ENCODE measurements at regions of chr10 and their contacts with region 1.

Region 1: GRCh38 chr10:21989453-21990154 is 13.9 kb downstream of the DNAJC1 start:
- DNase-seq: peak in 4 of 5 donors; percentile 15 to 77 (median 50)
- ATAC-seq: peak; percentile 87 to 95 (median 92)
- H3K4me3 ChIP-seq: no peak overlapping the region
- H3K27ac ChIP-seq: peak overlapping the region in 4 of 12 donors; percentile 3 to 44 (median 17)
- H3K4me1 ChIP-seq: peaks cover 0 to 11% (median 2%) of the 10 kb centered on the region in 12 donors
- H3K27me3 ChIP-seq: no peaks in the 10 kb centered on the region
- CTCF ChIP-seq: peak; percentile 16 to 62 (median 44)
- POLR2A ChIP-seq: no peak

Region 2: DNA sequence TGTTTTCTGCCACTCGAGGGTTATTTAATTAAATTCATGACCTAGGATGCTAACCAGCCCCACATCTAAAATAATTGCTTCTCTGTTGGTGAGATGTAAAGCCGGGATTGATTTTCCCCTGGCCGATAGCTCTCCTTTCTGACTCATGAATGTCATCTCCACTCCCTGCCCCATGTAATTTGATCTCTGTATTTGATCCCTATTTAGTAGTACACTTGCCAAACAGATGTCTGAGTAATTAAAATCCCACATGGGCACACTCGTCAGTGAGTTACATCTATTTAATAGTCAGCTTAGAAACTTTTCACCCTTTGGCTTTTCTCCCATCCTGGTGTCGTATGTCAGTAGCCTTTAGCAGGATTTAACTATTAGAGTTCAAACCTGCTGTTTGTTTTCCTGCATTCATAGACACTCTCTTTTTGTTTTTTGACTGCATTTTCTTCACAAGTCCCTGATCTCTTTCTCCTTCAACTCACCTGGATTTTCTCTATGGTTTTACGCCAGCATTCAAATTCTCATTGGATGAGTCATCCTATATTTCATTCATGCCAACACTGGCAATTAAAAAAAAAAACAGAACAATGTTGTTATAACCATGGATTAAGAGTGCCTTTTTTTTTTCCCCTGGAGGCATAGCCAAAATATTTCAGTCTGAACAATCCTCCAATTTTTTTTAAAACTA is 438.4 kb after region 1 on chr10:
- intact Hi-C with region 1: loop called in 1 of 10 experiments (anchors 10 kb)
- DNase-seq: no peak
- ATAC-seq: peak in 2 of 4 donors; percentile 33 to 42
- H3K4me3 ChIP-seq: no peak overlapping the region
- H3K27ac ChIP-seq: no peak overlapping the region
- H3K4me1 ChIP-seq: peaks cover 0 to 11% (median 7%) of the 10 kb centered on the region in 12 donors
- H3K27me3 ChIP-seq: peaks cover 0 to 9% (median 0%) of the 10 kb centered on the region in 9 donors
- CTCF ChIP-seq: no peak
- POLR2A ChIP-seq: no peak

Region 3: GRCh38 chr10:22560913-22561239 is 571.3 kb after region 1 on chr10:
- intact Hi-C with region 1: loop called in 1 of 10 experiments (anchors 10 kb)
- DNase-seq: no peak
- ATAC-seq: no peak
- H3K4me3 ChIP-seq: no peak overlapping the region
- H3K27ac ChIP-seq: no peak overlapping the region
- H3K4me1 ChIP-seq: no peaks in the 10 kb centered on the region
- H3K27me3 ChIP-seq: no peaks in the 10 kb centered on the region
- CTCF ChIP-seq: no peak
- POLR2A ChIP-seq: no peak

Region 4: DNA sequence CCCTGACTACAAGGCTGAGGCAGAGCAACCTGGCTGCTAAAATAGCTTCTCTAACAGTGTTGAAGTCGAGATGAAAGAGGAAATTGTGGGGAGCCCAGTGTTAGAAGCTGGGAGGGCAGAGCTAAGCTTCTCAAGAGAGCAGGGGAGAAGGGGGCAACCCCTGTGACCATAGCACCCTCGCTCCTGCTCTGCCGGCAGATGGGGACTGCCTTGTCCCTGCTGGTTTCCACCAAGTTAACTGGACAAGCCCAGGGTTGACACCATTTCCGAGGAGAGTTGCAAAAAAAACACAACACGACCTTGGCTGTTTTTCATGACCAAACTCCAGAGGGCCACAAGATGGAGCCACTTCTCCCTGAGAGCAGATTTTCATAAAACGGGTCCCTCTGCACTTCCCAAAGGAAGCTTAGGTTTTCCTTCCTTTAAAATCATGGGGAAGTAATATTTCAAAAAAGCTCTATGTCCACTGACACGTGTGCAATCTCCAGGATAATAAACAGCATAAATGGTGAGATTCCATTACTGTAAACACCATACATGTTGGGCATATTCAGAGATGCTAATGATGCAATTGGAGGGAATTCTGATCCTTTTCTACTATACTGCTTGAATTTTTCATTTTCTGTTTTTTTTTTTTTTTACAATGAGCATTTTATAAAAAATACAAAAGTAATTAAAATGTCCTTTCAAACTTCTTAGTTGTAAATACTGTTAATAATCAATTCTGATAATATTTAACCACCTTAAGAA is 584.4 kb after region 1 on chr10:
- intact Hi-C with region 1: loop called in 2 of 10 experiments (anchors 10 kb)
- DNase-seq: peak in 1 of 5 donors; percentile 24
- ATAC-seq: peak in 2 of 4 donors; percentile 49 to 53
- H3K4me3 ChIP-seq: no peak overlapping the region
- H3K27ac ChIP-seq: no peak overlapping the region
- H3K4me1 ChIP-seq: peaks cover 0 to 15% (median 6%) of the 10 kb centered on the region in 12 donors
- H3K27me3 ChIP-seq: no peaks in the 10 kb centered on the region
- CTCF ChIP-seq: peak in 10 of 12 donors; percentile 22 to 71 (median 37)
- POLR2A ChIP-seq: no peak

Region 5: DNA sequence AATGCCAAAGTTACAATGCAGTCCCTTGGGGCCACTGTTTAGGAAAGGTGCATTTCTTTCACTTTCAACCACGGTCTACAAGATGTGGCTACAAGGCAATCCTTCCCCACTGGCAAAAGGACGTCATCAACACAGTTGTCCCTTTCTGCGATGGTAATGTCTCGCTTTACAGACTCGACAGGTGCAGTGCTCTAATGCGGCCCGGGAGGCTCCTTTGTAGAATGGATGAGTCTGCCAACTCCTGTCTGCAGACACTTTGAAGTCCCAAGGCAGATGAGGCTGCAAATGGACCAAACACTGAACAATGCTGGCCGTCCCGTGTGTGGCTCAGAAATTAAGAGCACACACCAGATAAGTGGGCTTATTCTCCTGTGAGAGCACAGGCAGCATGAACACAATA is 591.1 kb after region 1 on chr10:
- intact Hi-C with region 1: loop called in 2 of 10 experiments (anchors 10 kb)
- DNase-seq: no peak
- ATAC-seq: no peak
- H3K4me3 ChIP-seq: no peak overlapping the region
- H3K27ac ChIP-seq: no peak overlapping the region
- H3K4me1 ChIP-seq: no peaks in the 10 kb centered on the region
- H3K27me3 ChIP-seq: no peaks in the 10 kb centered on the region
- CTCF ChIP-seq: no peak
- POLR2A ChIP-seq: no peak

Region 6: DNA sequence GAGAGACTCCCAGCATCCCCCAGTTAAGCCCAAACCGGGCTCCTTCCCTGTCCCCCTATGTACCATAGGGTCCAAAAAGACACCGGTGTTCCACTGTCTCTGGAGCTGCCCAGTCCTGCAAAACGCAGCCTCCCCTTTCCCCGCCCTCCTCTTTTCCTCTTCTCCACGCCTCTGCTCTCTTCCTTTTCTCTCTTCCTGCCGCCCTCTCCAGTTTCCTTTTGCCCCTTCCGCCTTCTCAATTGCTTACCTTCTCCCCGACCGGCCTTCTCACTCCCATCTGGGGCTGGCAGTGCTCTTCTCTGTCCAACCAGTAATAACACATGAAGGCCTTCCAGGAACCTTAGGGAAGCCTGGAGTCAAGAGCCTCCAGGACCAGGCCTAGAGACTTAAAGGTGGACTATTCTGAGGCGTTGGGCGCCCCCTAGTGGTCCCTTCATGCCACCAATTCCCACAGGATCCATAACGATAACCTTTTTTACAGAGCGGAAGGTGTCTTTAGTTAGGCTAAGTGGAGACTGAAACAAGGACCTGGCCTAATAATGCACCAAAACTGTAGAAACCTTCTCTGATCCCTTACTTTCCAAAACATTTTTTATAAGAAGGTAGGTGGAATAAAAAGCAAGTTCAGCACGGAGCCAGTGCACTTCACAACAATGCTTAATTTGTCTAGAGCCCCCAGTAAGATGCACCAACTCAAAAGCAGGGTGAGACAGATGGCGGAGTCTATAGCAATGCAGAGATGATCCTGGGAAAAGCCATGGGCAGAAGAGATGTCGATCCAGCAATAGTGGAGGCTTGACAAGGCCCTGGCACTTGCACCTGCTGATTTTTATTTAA is 1078.6 kb after region 1 on chr10:
- intact Hi-C with region 1: loop called in 1 of 10 experiments (anchors 10 kb)
- DNase-seq: peak; percentile 59 to 83 (median 66)
- ATAC-seq: peak; percentile 25 to 73 (median 68)
- H3K4me3 ChIP-seq: no peak overlapping the region
- H3K27ac ChIP-seq: no peak overlapping the region
- H3K4me1 ChIP-seq: peaks cover 0 to 23% (median 10%) of the 10 kb centered on the region in 12 donors
- H3K27me3 ChIP-seq: no peaks in the 10 kb centered on the region
- CTCF ChIP-seq: peak; percentile 70 to 90 (median 82)
- POLR2A ChIP-seq: no peak

Region 7: GRCh38 chr10:23864631-23865147 is 1875.1 kb after region 1 on chr10:
- intact Hi-C with region 1: no loop called
- DNase-seq: no peak
- ATAC-seq: no peak
- H3K4me3 ChIP-seq: no peak overlapping the region
- H3K27ac ChIP-seq: no peak overlapping the region
- H3K4me1 ChIP-seq: no peaks in the 10 kb centered on the region
- H3K27me3 ChIP-seq: no peaks in the 10 kb centered on the region
- CTCF ChIP-seq: no peak
- POLR2A ChIP-seq: no peak

Measured in heart left ventricle (tissue), 16 donors.